Panc1 (cell line): ENCODE measurements at regions of chr5 and their contacts with region 1.

Region 1: DNA sequence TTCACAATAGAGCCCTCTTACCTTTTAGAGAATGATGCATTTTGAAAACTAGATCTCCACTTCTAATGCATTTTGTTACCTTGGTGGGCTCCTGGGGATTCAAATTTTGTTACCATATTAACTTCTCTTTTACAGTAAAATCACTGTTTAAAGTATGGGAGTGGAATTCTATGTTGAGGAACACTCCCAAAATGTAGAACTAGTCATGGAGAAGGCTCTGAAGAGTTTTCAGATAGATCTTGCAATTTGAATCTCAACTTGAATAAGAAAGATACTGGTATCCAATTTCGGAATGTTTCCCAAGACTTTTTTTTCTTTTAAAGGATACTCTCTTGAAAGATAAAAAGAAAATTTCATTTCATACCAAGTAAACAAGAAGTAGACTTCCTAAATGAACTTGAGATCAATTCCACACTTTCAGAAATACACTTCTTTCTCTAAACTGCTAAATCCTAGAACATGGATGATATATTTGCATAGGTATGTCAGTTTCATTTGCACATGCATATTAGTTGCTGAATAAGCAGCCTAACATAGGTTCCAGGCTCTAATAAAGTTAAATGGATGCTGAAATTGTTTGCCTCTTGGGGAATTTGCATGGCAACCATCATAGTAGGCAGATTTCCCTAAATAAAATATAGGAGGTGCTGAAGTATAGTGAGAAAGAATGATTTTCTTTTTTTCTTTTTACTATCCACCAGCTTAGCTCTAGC is 205.4 kb downstream of the ADAMTS6 start:
- DNase-seq: no peak
- ATAC-seq: no peak
- H3K4me3 ChIP-seq: no peak overlapping the region
- H3K27ac ChIP-seq: no peak overlapping the region
- H3K4me1 ChIP-seq: no peaks in the 10 kb centered on the region
- H3K27me3 ChIP-seq: no peaks in the 10 kb centered on the region; the same call in 1 of the 2 replicates
- CTCF ChIP-seq: no peak

Region 2: DNA sequence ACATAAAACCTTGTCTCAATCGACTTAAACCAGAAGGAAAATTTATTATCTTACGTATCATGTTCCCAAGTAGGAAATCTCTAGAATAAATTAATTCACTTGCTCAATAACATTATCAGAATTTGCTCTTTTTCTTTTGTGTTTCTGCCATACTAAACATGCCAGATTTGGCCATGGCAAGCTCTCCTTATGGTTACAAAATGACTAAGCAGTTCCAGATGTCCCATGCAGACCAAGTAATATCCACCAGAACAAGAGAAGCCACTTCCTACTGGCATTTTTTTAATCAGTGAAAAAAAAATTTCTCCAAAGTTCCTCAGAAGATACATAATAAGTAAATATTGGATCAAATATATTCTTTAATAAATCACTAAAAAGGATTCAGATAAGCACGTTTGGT is 230.6 kb after region 1 on chr5:
- CTCF ChIA-PET with region 1: no interaction called
- POLR2A ChIA-PET with region 1: no interaction called
- in situ Hi-C with region 1: no loop called
- intact Hi-C with region 1: no loop called
- DNase-seq: no peak
- ATAC-seq: no peak
- H3K4me3 ChIP-seq: no peak overlapping the region
- H3K27ac ChIP-seq: no peak overlapping the region
- H3K4me1 ChIP-seq: no peaks in the 10 kb centered on the region
- H3K27me3 ChIP-seq: no peaks in the 10 kb centered on the region
- CTCF ChIP-seq: no peak

Region 3: GRCh38 chr5:66382152-66382551 is 1105.8 kb after region 1 on chr5:
- CTCF ChIA-PET with region 1: no interaction called
- POLR2A ChIA-PET with region 1: interaction called, 15 read pairs
- in situ Hi-C with region 1: no loop called
- intact Hi-C with region 1: no loop called
- DNase-seq: no peak
- ATAC-seq: no peak
- H3K4me3 ChIP-seq: no peak overlapping the region
- H3K27ac ChIP-seq: no peak overlapping the region
- H3K4me1 ChIP-seq: no peaks in the 10 kb centered on the region
- H3K27me3 ChIP-seq: no peaks in the 10 kb centered on the region
- CTCF ChIP-seq: no peak